SK-N-SH (cell line): ENCODE measurements at regions of chr11 and their contacts with region 1.

Region 1: GRCh38 chr11:117843666-117844484 is 19.3 kb upstream of the FXYD2 start:
- DNase-seq: peak; percentile 74
- H3K4me3 ChIP-seq: no peak overlapping the region; a peak in 1 of 4 replicates
- H3K27ac ChIP-seq: no peak overlapping the region
- H3K4me1 ChIP-seq: peaks cover 0 to 2% of the 10 kb centered on the region in 2 experiments; a peak in 1 of 4 replicates
- H3K27me3 ChIP-seq: no peaks in the 10 kb centered on the region; the same call in 1 of the 2 replicates
- CTCF ChIP-seq: peak; percentile 96
- EP300 ChIP-seq: no peak
- RAD21 ChIP-seq: peak; percentile 91

Region 2: GRCh38 chr11:117817368-117818040 is 26.4 kb before region 1 on chr11:
- CTCF ChIA-PET with region 1: interaction called, 35 read pairs
- POLR2A ChIA-PET with region 1: no interaction called
- DNase-seq: peak; percentile 83
- H3K4me3 ChIP-seq: peak overlapping the region in 1 of 2 experiments; percentile 33; a peak in 1 of 4 replicates
- H3K27ac ChIP-seq: no peak overlapping the region
- H3K4me1 ChIP-seq: peaks cover 8 to 28% of the 10 kb centered on the region in 2 experiments; a peak in 2 of 4 replicates
- H3K27me3 ChIP-seq: no peaks in the 10 kb centered on the region
- CTCF ChIP-seq: peak; percentile 98
- EP300 ChIP-seq: no peak
- RAD21 ChIP-seq: peak; percentile 92

Region 3: GRCh38 chr11:117855186-117855845 is 11.4 kb after region 1 on chr11:
- CTCF ChIA-PET with region 1: interaction called, 20 read pairs
- POLR2A ChIA-PET with region 1: no interaction called
- DNase-seq: no peak
- H3K4me3 ChIP-seq: no peak overlapping the region
- H3K27ac ChIP-seq: no peak overlapping the region
- H3K4me1 ChIP-seq: no peaks in the 10 kb centered on the region; a peak in 1 of 4 replicates
- H3K27me3 ChIP-seq: no peaks in the 10 kb centered on the region; the same call in 1 of the 2 replicates
- CTCF ChIP-seq: no peak
- EP300 ChIP-seq: no peak
- RAD21 ChIP-seq: no peak

Region 4: GRCh38 chr11:117870103-117870952 is 26.5 kb after region 1 on chr11:
- CTCF ChIA-PET with region 1: interaction called, 33 read pairs
- POLR2A ChIA-PET with region 1: no interaction called
- DNase-seq: peak; percentile 52
- H3K4me3 ChIP-seq: no peak overlapping the region
- H3K27ac ChIP-seq: peak overlapping the region in 1 of 2 experiments; percentile 81; a peak in 2 of 4 replicates
- H3K4me1 ChIP-seq: peaks cover 0 to 48% of the 10 kb centered on the region in 2 experiments; a peak in 1 of 4 replicates
- H3K27me3 ChIP-seq: peaks cover 17% of the 10 kb centered on the region; the same call in 1 of the 2 replicates
- CTCF ChIP-seq: no peak
- EP300 ChIP-seq: no peak
- RAD21 ChIP-seq: no peak

Region 5: DNA sequence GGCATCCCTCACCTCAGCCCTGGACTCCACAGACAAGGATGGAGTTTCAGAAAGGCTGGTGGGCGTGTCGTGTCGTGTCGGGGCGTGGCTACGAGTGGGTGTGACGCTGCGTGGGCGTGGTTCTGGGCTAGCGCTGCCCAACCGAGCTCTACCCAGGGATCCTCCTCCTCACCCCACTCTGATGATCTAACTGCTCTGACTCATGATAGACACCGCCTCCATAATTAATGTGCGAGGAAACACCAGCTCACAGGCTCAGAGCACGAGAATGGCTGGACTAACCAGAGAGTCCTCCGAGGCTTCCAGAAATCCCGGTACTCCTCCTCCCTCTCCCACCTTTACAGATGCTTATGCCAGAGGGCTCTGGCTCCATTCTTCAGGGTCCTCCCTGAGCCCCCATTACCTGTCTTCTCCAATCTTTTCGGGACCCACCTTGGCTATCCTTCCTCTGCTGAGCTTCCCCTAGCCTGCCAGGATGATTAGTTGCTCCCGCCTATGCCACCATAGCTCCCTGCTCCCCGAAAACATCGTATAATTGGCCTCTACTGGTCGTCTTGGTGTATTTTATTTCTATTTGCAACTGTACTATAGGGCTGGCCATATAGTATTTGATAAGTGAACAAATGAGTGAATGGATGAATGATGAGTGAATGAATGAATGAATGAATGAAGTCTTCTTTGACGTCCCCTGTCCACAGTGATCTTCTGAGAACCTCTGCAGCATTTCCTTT is 63.5 kb after region 1 on chr11:
- CTCF ChIA-PET with region 1: interaction called, 18 read pairs
- POLR2A ChIA-PET with region 1: no interaction called
- DNase-seq: peak; percentile 74
- H3K4me3 ChIP-seq: no peak overlapping the region
- H3K27ac ChIP-seq: no peak overlapping the region
- H3K4me1 ChIP-seq: peaks cover 5 to 24% of the 10 kb centered on the region in 2 experiments; a peak in 2 of 4 replicates
- H3K27me3 ChIP-seq: peaks cover 6% of the 10 kb centered on the region; the same call in 1 of the 2 replicates
- CTCF ChIP-seq: no peak
- EP300 ChIP-seq: no peak
- RAD21 ChIP-seq: no peak

Region 6: GRCh38 chr11:117932067-117932370 is 88.1 kb after region 1 on chr11:
- CTCF ChIA-PET with region 1: interaction called, 12 read pairs
- POLR2A ChIA-PET with region 1: no interaction called
- DNase-seq: no peak
- H3K4me3 ChIP-seq: no peak overlapping the region
- H3K27ac ChIP-seq: no peak overlapping the region
- H3K4me1 ChIP-seq: peaks cover 0 to 5% of the 10 kb centered on the region in 2 experiments; a peak in 1 of 4 replicates
- H3K27me3 ChIP-seq: peaks cover 7% of the 10 kb centered on the region; the same call in 1 of the 2 replicates
- CTCF ChIP-seq: no peak
- EP300 ChIP-seq: no peak
- RAD21 ChIP-seq: no peak

Region 7: DNA sequence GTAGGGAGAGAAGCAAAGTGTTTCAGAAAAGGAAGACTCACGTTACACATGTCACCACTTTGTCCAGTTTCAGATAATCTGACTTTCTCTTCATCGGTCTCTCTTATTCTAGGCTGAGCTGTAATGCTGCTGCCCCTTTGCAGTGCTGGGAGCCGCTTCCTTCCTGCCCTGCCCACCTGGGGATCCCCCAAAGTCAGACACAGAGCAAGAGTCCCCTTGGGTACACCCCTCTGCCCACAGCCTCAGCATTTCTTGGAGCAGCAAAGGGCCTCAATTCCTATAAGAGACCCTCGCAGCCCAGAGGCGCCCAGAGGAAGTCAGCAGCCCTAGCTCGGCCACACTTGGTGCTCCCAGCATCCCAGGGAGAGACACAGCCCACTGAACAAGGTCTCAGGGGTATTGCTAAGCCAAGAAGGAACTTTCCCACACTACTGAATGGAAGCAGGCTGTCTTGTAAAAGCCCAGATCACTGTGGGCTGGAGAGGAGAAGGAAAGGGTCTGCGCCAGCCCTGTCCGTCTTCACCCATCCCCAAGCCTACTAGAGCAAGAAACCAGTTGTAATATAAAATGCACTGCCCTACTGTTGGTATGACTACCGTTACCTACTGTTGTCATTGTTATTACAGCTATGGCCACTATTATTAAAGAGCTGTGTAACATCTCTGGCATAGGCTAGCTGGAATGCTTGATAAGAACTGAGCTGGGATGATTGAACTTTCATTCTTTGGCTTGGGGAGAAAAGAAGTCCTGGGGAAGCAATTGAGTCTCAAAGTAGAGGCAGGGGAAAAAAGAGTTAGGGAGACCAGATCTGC is 274.1 kb after region 1 on chr11:
- CTCF ChIA-PET with region 1: no interaction called
- POLR2A ChIA-PET with region 1: no interaction called
- DNase-seq: no peak
- H3K4me3 ChIP-seq: no peak overlapping the region
- H3K27ac ChIP-seq: no peak overlapping the region
- H3K4me1 ChIP-seq: no peaks in the 10 kb centered on the region
- H3K27me3 ChIP-seq: no peaks in the 10 kb centered on the region; the same call in 1 of the 2 replicates
- CTCF ChIP-seq: no peak
- EP300 ChIP-seq: no peak
- RAD21 ChIP-seq: no peak